ENCODE measurements at regions of chr15 and their contacts with region 1.

Region 1: DNA sequence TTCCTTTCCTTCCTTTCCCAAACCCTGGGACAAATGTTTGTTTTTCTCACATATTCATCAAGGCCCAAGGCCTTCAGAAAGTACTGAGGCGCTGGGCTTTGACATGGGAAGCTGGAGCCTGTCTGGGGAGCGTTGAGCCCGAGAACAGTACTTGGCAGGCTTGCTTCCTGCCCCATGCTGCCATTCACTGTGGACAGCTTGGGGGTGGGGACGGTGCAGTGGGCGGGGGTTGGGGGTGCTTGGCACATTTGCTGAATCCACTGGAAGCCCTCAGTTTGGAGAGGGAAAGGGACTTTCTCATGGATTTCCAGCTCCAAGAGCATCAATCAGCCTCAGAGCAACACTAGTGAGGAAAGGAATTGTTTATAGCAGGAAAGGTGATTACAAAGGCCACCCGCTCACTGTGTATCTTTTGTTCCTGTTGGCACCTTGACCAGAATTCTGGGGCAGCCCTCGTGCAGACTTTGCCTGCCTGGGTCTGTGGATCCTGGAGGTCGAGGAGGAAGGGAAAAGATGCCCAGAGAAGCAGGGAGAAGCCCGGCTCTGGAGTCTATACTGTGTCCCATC is 199.8 kb upstream of the RGMA start:
- DNase-seq: no peak

Region 2: DNA sequence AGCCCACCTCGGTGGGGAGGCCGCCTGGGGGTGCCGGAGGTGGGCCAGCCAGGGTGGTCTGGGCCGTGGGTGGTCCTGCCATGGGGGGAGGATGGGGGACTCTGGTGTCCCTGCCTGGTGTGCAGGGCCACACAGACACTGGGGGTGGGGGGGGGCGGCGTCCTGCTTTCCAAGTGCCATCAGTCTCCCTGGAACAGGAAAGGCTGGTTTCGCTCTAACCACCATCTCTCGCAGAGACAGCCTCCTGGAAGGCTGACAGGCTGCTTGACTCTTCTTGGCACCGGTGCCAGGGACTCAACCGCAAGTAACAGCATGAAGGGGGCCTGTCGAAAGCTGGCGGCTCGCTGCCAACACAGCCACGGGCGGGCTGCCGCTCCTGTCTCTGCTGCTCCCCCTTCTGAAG is 240.1 kb before region 1 on chr15:
- intact Hi-C with region 1: loop called (anchors 10 kb)
- DNase-seq: no peak

Region 3: GRCh38 chr15:93250950-93251349 is 37.9 kb before region 1 on chr15:
- intact Hi-C with region 1: no loop called
- DNase-seq: no peak